ENCODE measurements at regions of chr22 and their contacts with region 1.

Region 1: GRCh38 chr22:39319270-39320022 is at the start of gene RPL3:
- DNase-seq: peak; percentile 86 to 97
- H3K4me3 ChIP-seq: peak within 1 kb of the TSS; percentile 83 to 92
- H3K27ac ChIP-seq: peak within 1 kb of the TSS; percentile 93 to 96
- H3K4me1 ChIP-seq: peaks cover 11 to 34% of the 10 kb centered on the region in 2 donors
- H3K27me3 ChIP-seq: no peaks in the 10 kb centered on the region
- CTCF ChIP-seq: peak; percentile 19 to 28 (median 23)
- total RNA-seq, gene RPL3: 1,479 TPM

Region 2: DNA sequence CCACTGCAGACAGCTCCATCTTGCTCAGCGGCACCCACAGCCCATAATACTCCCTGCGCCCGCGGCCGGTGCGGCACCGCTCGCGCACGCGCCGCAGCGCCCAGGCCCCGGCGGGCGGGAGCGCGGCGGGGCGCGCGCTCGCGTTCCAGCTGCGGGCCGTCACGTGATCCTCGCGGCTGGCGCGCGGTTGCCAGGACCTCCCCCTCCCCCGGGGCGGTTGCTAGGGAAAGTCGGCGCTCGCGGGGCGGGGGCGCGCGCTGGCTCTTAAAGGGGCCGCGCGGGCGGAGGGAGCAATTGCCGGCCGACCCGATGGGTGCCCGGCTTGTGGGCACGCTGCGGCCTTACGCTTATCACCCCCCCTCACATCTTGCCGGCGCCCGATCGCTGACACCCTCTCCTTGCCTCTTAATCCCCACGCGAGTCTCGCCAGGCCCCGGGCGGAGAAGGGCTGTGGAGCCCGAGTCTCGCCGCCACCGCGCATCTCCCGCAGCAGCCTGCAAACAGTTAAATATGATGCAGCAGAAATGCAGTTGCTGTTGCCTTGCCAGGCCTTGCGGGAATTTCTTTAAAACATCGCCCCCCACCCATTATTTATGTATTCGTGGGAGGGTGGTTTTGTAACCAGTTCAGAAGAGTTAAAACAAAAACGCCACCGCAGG is 447.1 kb before region 1 on chr22 and contains the start of gene CBX6:
- intact Hi-C with region 1: loop called (anchors 5 kb)
- DNase-seq: peak; percentile 73 to 97
- H3K4me3 ChIP-seq: peak within 1 kb of the TSS; percentile 70 to 87
- H3K27ac ChIP-seq: peak within 1 kb of the TSS; percentile 88 to 96
- H3K4me1 ChIP-seq: peaks cover 8 to 28% of the 10 kb centered on the region in 2 donors
- H3K27me3 ChIP-seq: no peaks in the 10 kb centered on the region
- CTCF ChIP-seq: no peak
- total RNA-seq, gene CBX6: 159 TPM

Region 3: GRCh38 chr22:39152511-39153219 is 166.8 kb before region 1 on chr22 and contains the start of gene CBX7:
- intact Hi-C with region 1: loop called (anchors 1 kb)
- DNase-seq: peak; percentile 84 to 98
- H3K4me3 ChIP-seq: peak within 1 kb of the TSS; percentile 88 to 92
- H3K27ac ChIP-seq: peak within 1 kb of the TSS; percentile 93 to 96
- H3K4me1 ChIP-seq: peaks cover 6 to 24% of the 10 kb centered on the region in 2 donors
- H3K27me3 ChIP-seq: no peaks in the 10 kb centered on the region
- CTCF ChIP-seq: no peak
- total RNA-seq, gene CBX7: 261 TPM

Region 4: GRCh38 chr22:39395936-39396796 is 76.7 kb after region 1 on chr22:
- intact Hi-C with region 1: loop called (anchors 5 kb)
- DNase-seq: no peak
- H3K4me3 ChIP-seq: no peak overlapping the region
- H3K27ac ChIP-seq: no peak overlapping the region
- H3K4me1 ChIP-seq: peaks cover 3 to 8% of the 10 kb centered on the region in 2 donors
- H3K27me3 ChIP-seq: no peaks in the 10 kb centered on the region
- CTCF ChIP-seq: no peak

Measured in ascending aorta (tissue), 2 donors.